Activated CD8-positive, alpha-beta T cell treated with anti-CD3 and anti-CD28 coated beads for 36 hours (primary cell): ENCODE measurements at regions of chr12 and their contacts with region 1.

Region 1: GRCh38 chr12:49842519-49843352 is at the start of gene BCDIN3D:
- DNase-seq: peak; percentile 95
- ATAC-seq: peak; percentile 90
- H3K4me3 Mint-ChIP-seq: peak within 1 kb of the TSS; percentile 94
- H3K27ac Mint-ChIP-seq: peak within 1 kb of the TSS; percentile 91
- H3K4me1 Mint-ChIP-seq: peaks cover 28% of the 10 kb centered on the region
- H3K27me3 Mint-ChIP-seq: no peaks in the 10 kb centered on the region
- CTCF ChIP-seq: no peak
- total RNA-seq, gene BCDIN3D: 5.0 to 5.3 TPM

Region 2: GRCh38 chr12:49636979-49637755 is 205.6 kb before region 1 on chr12:
- CTCF ChIA-PET with region 1: interaction called, 13 read pairs
- POLR2A ChIA-PET with region 1: no interaction called
- intact Hi-C with region 1: no loop called
- DNase-seq: peak; percentile 84
- ATAC-seq: peak; percentile 97
- H3K4me3 Mint-ChIP-seq: no peak overlapping the region
- H3K27ac Mint-ChIP-seq: peak overlapping the region; percentile 60
- H3K4me1 Mint-ChIP-seq: peaks cover 18% of the 10 kb centered on the region
- H3K27me3 Mint-ChIP-seq: no peaks in the 10 kb centered on the region
- CTCF ChIP-seq: peak; percentile 67

Region 3: DNA sequence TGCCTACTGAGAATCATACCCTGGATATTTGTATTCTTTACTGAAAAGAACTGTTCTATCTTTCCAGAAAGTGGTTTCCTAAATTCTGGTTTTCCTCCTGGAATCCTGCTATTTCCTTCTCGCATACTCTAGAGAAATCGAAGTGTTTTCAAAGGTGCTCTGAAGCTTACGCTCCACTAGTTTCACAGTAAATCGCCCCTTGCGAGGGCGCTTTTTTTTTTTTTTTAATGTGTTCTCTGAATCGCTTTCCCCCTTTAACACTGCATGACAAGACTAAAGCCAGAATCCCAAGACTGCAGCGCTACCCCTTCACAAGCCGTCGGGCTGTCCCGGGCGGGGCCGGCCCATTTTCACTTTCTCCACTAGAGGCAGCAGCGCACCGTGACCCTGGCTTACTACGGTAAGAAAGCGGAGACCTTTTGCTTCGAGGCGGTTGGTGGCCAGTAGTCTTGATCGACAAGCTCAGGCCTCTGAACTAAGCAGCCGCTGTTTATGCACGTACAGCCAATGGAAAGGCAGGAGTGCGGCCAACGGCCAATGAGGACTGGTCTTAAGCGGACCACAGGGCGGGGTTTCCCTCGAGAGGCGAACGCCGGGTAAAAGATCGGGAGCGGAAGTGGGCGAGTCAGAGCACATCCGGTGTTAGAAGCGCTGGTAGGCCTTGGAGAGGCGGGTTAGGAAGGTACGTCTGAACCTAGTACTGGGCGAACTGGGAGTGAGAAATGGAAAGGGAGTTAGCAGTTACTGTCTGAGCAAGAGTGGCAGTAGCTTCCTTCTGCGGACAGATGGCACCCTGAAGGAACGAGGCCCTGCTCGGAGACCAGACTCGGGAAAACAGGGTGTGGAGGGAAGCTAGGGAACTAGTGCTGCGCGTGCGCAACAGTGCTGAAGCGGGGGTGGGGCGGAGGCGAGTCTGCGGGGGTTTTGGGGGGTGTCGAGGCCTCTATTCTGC is 101.5 kb before region 1 on chr12 and contains the start of gene TMBIM6:
- CTCF ChIA-PET with region 1: interaction called, 36 read pairs
- POLR2A ChIA-PET with region 1: interaction called, 8 read pairs
- intact Hi-C with region 1: no loop called
- DNase-seq: peak; percentile 100
- ATAC-seq: peak; percentile 91
- H3K4me3 Mint-ChIP-seq: peak within 1 kb of the TSS; percentile 99
- H3K27ac Mint-ChIP-seq: peak within 1 kb of the TSS; percentile 95
- H3K4me1 Mint-ChIP-seq: peaks cover 31% of the 10 kb centered on the region
- H3K27me3 Mint-ChIP-seq: no peaks in the 10 kb centered on the region
- CTCF ChIP-seq: peak; percentile 95
- total RNA-seq, gene TMBIM6: 437 to 443 TPM

Region 4: GRCh38 chr12:49763006-49763591 is 79.6 kb before region 1 on chr12:
- CTCF ChIA-PET with region 1: interaction called, 70 read pairs
- POLR2A ChIA-PET with region 1: interaction called, 5 read pairs
- intact Hi-C with region 1: no loop called
- DNase-seq: peak; percentile 89
- ATAC-seq: peak; percentile 56
- H3K4me3 Mint-ChIP-seq: peak overlapping the region; percentile 18
- H3K27ac Mint-ChIP-seq: peak overlapping the region; percentile 86
- H3K4me1 Mint-ChIP-seq: peaks cover 68% of the 10 kb centered on the region
- H3K27me3 Mint-ChIP-seq: no peaks in the 10 kb centered on the region
- CTCF ChIP-seq: peak; percentile 85

Region 5: DNA sequence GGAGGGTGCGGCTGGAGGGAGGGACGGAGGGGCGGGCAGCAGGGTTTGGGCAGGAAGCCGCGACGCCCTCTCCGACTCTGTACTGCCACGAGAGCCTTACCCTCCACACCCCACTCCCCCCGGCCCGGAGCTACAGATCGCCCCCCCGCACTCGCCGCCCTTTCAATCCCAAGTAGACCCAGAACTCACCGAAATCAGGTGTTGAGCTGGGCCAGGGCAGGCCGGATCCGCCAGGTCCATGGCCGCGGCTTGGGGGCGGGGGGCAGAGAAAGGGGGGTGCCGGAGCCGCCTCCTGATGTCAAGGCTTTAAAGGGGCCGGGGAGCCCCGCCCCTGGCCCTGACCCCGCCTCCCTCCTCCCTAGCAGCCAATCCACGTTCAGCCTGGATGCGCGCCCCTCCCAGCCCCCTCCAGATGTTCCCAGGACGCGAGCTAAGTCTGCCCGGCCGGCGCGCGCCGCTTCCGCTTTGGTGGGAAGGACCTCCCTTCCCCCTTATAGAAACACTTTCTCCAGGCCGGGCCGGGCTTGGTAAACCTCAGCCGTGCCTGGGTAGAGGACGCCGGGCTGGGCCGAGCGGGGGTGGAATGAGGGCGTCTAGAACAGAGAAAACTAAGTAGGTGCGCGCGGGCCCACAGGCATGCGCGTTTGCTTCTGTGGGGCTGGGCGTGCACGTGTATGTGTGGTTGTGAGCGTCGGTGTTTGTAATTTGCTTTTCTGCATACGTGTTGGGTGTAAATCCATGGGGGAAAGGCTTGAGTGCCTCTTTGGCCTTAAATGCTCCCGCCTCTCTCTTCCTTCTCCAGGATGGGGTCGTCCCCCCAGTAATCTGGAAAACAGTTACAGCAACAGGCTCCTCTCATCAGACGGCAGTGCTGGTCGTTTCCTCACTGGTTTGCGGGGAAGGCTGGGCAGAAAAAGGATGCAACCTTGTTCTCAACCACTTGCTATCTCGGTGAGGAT is 14.3 kb before region 1 on chr12 and contains the start of gene NCKAP5L:
- CTCF ChIA-PET with region 1: interaction called, 67 read pairs
- POLR2A ChIA-PET with region 1: interaction called, 6 read pairs
- intact Hi-C with region 1: no loop called
- DNase-seq: peak; percentile 97
- ATAC-seq: peak; percentile 99
- H3K4me3 Mint-ChIP-seq: peak within 1 kb of the TSS; percentile 90
- H3K27ac Mint-ChIP-seq: peak within 1 kb of the TSS; percentile 92
- H3K4me1 Mint-ChIP-seq: peaks cover 25% of the 10 kb centered on the region
- H3K27me3 Mint-ChIP-seq: no peaks in the 10 kb centered on the region
- CTCF ChIP-seq: no peak
- total RNA-seq, gene NCKAP5L: 5.5 to 5.7 TPM

Region 6: GRCh38 chr12:49866859-49867579 is 24.3 kb after region 1 on chr12:
- CTCF ChIA-PET with region 1: interaction called, 19 read pairs
- POLR2A ChIA-PET with region 1: no interaction called
- intact Hi-C with region 1: no loop called
- DNase-seq: peak; percentile 85
- ATAC-seq: peak; percentile 98
- H3K4me3 Mint-ChIP-seq: no peak overlapping the region
- H3K27ac Mint-ChIP-seq: no peak overlapping the region
- H3K4me1 Mint-ChIP-seq: no peaks in the 10 kb centered on the region
- H3K27me3 Mint-ChIP-seq: no peaks in the 10 kb centered on the region
- CTCF ChIP-seq: peak; percentile 92